Activated CD4-positive, alpha-beta T cell treated with anti-CD3 and anti-CD28 coated beads, Interleukin-2, amount 10 ng/mL, durations not matched to agents 24 days and 14 days (primary cell): ENCODE measurements at regions of chr12 and their contacts with region 1.

Region 1: GRCh38 chr12:103548622-103549601 is 38.2 kb upstream of the STAB2 start:
- DNase-seq: peak; percentile 91
- H3K4me3 Mint-ChIP-seq: no peak overlapping the region
- H3K27ac Mint-ChIP-seq: no peak overlapping the region
- H3K4me1 Mint-ChIP-seq: peaks cover 3% of the 10 kb centered on the region
- H3K27me3 Mint-ChIP-seq: peaks cover 11% of the 10 kb centered on the region

Region 2: DNA sequence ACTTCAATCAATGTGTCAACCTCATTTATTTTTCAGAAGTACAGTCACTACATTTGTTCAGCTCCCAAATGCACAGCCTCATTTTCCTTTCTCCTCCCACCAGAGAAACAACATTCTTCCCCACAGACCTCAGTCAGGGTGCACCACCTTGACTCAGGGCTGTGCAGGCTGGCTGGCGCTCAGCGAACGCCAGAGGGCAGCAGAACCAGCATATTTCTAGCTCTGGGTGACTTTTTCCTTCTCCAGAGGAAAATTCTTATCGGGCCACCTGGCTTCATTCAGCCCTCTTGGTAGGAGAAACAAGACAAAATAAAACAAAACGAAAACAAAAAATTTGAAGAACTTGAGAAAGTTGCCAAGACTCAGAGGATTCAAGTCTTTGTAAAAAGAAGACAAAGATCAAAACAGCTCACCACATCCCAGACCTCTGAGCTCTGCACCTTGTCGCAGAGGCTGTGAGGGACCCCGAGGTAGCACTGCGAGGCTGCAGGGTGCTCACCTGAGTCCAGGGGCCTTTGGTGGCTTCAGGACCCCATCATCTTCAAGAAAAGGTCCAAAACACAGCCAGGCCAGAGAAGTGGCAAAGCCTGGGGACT is 665.6 kb before region 1 on chr12:
- intact Hi-C with region 1: loop called (anchors 1 kb)
- DNase-seq: peak; percentile 80
- H3K4me3 Mint-ChIP-seq: no peak overlapping the region
- H3K27ac Mint-ChIP-seq: no peak overlapping the region
- H3K4me1 Mint-ChIP-seq: peaks cover 7% of the 10 kb centered on the region
- H3K27me3 Mint-ChIP-seq: peaks cover 9% of the 10 kb centered on the region

Region 3: DNA sequence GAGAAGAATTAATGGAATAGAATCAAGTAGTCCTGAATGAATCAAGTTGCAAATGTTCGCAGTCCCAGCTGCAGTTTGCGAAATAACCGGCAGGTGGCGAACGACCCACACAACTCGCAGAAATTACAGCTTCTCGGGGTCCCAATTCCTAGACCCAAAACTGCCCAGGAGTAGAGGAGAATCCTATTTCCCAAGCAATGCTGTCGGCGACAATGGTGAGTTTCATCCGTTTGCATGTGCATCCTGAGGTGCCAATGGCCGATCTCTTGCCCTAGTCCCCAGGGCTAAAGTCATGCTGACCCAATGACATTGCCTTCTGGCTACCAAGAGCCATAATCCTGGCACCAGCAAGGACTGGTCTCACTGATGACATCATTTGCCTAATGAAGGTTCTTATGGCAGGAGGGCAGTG is 600.0 kb before region 1 on chr12:
- intact Hi-C with region 1: loop called (anchors 1 kb)
- DNase-seq: peak; percentile 84
- H3K4me3 Mint-ChIP-seq: no peak overlapping the region
- H3K27ac Mint-ChIP-seq: no peak overlapping the region
- H3K4me1 Mint-ChIP-seq: peaks cover 11% of the 10 kb centered on the region
- H3K27me3 Mint-ChIP-seq: peaks cover 49% of the 10 kb centered on the region

Region 4: GRCh38 chr12:103326190-103326589 is 222.7 kb before region 1 on chr12:
- intact Hi-C with region 1: loop called (anchors 10 kb)
- DNase-seq: no peak
- H3K4me3 Mint-ChIP-seq: no peak overlapping the region
- H3K27ac Mint-ChIP-seq: no peak overlapping the region
- H3K4me1 Mint-ChIP-seq: no peaks in the 10 kb centered on the region
- H3K27me3 Mint-ChIP-seq: no peaks in the 10 kb centered on the region

Region 5: DNA sequence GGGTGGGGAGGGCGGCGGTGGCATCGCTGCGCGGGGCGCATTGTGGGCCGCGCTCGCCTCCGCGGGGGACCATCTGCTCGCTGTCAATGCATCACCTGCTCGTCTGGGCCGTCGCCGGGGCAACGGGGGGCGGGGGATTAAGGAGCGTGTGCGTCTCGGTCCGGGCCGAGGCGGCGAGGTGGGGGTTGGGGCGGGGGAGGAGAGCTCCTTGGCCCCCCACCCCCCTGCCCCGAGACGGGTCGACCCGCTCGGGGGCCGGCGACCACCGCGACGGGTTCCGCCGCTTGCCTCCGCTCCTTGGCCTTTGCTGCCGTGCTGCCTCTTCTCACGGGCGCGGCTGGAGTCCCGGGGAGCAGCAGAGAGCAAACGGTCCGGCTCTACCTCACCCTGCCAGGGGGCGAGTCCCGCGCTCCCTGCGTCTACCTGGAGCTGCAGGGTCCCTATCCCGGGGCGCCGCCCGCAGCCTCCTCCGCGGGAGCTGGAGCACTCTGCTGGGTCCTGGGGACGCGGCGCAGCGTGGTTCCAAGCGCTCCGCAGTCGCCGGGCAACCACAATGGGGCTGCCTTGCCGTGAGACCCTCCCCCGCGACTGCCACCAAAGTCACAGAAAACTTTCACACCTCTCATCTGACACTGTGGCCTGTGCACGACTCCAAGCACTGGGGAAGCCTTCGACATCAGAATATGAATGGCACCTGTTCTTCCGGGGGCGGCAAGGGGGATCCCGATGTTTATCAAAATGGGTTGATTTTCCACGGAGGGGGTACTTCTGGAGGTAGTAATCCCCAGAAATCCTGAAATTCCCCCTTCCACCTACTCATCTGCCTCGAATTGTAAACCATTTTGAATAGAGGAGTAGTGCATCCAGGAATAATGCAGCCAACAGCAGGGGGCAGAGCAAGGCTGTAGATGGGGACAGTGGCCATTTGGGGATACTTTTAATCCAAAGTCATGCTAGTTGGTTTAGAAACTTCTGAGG is 53.1 kb before region 1 on chr12 and contains the start of gene C12orf42:
- intact Hi-C with region 1: loop called (anchors 1 kb)
- DNase-seq: peak; percentile 86
- H3K4me3 Mint-ChIP-seq: peak within 1 kb of the TSS; percentile 68
- H3K27ac Mint-ChIP-seq: peak within 1 kb of the TSS; percentile 72
- H3K4me1 Mint-ChIP-seq: peaks cover 25% of the 10 kb centered on the region
- H3K27me3 Mint-ChIP-seq: peaks cover 39% of the 10 kb centered on the region
- total RNA-seq, gene C12orf42: not detected in 2 replicates

Region 6: DNA sequence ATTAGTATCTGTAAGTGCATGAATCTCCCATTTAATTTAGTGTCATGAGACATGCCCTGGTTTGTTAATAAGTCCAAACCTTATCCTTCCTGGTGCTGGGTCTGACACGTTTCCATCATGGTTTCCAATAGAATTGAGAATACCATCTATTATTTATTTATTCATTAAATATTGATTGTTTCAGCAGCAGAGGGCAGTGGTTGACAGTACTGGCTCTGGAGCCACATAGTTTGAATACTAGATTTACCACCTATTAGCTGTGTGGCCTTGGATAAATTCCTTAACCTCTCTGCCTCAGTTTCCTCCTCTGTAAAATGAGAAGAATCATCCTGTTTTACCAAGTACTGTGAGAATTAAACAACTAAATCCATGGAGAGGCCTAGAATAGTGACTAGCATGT is 37.2 kb after region 1 on chr12:
- intact Hi-C with region 1: no loop called
- DNase-seq: no peak
- H3K4me3 Mint-ChIP-seq: no peak overlapping the region
- H3K27ac Mint-ChIP-seq: no peak overlapping the region
- H3K4me1 Mint-ChIP-seq: no peaks in the 10 kb centered on the region
- H3K27me3 Mint-ChIP-seq: peaks cover 13% of the 10 kb centered on the region